Calu3 (cell line): ENCODE measurements at regions of chr11 and their contacts with region 1.

Region 1: GRCh38 chr11:19076744-19077589 is 16.4 kb upstream of the MRGPRX2 start:
- DNase-seq: peak; percentile 79
- H3K4me3 Mint-ChIP-seq: no peak overlapping the region
- H3K27ac Mint-ChIP-seq: no peak overlapping the region
- H3K4me1 Mint-ChIP-seq: peaks cover 42% of the 10 kb centered on the region
- H3K27me3 Mint-ChIP-seq: no peaks in the 10 kb centered on the region
- CTCF ChIP-seq: peak; percentile 91

Region 2: GRCh38 chr11:19060629-19061028 is 16.3 kb before region 1 on chr11 and contains the start of gene MRGPRX2:
- CTCF ChIA-PET with region 1: no interaction called
- intact Hi-C with region 1: no loop called
- DNase-seq: no peak
- H3K4me3 Mint-ChIP-seq: no peak within 1 kb of the TSS
- H3K27ac Mint-ChIP-seq: no peak within 1 kb of the TSS
- H3K4me1 Mint-ChIP-seq: no peaks in the 10 kb centered on the region
- H3K27me3 Mint-ChIP-seq: peaks cover 99% of the 10 kb centered on the region
- CTCF ChIP-seq: no peak
- total RNA-seq, gene MRGPRX2: not detected in 2 replicates

Region 3: DNA sequence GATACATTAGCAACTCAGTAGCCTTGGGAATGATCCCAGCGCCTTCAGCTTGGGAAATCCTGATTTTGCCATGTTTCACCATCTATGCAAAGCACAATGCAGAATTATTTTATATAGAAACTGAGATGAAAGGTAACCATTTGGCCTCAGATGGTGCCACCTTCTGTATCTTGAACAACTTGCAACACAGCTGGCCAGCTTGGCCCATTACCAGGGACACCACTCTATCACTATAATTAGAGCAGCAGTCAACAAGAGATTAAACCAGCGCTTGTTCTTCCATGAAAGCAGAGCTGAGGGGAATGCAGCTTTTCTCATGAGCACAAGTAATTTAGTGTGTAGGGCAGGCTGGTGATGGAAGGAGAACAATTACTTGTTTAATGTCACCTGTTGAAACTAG is 33.3 kb after region 1 on chr11:
- CTCF ChIA-PET with region 1: interaction called, 8 read pairs
- intact Hi-C with region 1: loop called (anchors 2 kb)
- DNase-seq: no peak
- H3K4me3 Mint-ChIP-seq: no peak overlapping the region
- H3K27ac Mint-ChIP-seq: no peak overlapping the region
- H3K4me1 Mint-ChIP-seq: no peaks in the 10 kb centered on the region
- H3K27me3 Mint-ChIP-seq: no peaks in the 10 kb centered on the region
- CTCF ChIP-seq: no peak

Region 4: DNA sequence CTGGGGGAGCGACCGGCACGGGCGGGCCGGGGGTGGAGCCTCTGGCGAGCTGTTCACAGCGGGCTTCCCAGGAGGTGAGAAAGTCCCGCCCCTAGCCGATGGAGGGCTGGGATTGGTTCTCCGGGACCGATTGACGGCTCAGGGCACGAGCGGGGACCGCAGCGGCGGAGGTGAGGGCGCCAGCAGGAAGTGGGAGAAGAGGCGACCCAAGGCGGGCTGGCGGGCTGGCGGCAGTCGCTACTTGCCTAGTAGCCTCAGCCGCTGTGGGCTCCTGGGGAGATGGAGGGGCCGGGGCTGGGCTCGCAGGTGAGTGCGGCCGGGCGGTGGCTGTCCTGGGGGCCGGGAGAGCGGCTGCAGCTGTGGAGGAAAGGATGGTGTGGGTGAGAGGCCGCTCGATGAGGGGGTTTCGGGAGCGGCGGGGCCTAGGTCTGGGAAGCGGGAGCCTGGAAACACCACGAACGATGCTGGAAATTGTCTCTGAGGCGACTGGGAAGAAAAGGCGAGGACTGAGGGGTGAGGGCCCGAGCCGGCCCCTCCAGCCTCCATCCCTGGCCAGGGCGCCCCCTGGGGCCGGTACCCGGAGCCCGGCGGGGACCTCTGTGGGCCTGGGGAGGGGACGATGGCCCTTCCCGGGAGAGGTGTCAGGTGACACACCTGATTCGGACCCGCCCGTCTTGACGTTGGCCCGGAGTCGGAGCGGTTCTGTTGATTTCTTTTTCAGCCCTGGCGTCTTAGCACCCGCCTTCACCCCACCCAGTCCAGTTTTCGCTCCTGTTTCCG is 40.2 kb after region 1 on chr11 and contains the start of gene ZDHHC13:
- CTCF ChIA-PET with region 1: interaction called, 13 read pairs
- intact Hi-C with region 1: loop called (anchors 2 kb)
- DNase-seq: peak; percentile 97
- H3K4me3 Mint-ChIP-seq: peak within 1 kb of the TSS; percentile 89
- H3K27ac Mint-ChIP-seq: peak within 1 kb of the TSS; percentile 77
- H3K4me1 Mint-ChIP-seq: peaks cover 35% of the 10 kb centered on the region
- H3K27me3 Mint-ChIP-seq: no peaks in the 10 kb centered on the region
- CTCF ChIP-seq: peak; percentile 62
- total RNA-seq, gene ZDHHC13: 22.4 and 26.8 TPM in 2 replicates

Region 5: DNA sequence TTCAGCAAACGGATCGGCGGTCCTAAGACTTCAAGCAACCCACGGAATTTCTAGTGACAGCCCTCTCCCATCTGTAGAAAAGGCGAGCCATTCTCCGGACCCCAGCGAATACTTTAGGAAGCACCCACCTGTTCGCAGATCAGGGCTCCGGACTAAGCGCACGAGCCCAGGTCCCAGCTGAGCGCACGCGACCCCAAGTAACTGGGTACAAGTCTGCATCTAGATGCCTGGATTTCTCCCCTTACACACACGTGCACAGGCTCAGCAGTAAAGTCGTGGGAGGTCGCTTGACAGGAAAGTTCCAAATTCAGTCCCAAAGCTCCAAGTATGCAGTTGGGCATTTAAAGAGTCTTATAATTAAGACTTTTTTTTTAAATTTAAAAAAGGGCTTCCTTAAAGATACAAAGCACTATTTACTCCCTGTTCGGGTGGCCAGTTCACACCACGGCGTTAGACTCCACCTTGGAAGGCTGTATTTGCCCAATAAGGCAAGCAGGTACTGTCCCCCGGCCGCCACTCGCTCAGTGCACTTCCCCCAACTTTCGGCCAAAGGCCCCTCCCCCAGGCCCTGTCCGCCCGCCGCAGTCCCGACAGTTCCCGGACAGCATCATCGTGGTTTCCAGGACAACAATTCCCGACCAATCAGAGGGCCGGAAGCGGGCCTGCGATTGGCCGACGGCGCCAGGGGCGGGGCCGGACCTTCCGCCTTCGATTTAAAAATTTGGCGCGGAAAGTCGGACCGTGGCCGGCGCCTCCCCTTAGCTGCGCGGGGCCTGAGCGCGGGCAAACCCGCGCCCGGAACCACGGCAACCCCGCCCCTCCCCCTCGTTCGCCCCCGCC is 163.7 kb after region 1 on chr11 and contains the start of gene E2F8:
- CTCF ChIA-PET with region 1: interaction called, 3 read pairs
- intact Hi-C with region 1: loop called (anchors 5 kb)
- DNase-seq: peak; percentile 98
- H3K4me3 Mint-ChIP-seq: peak within 1 kb of the TSS; percentile 70
- H3K27ac Mint-ChIP-seq: peak within 1 kb of the TSS; percentile 75
- H3K4me1 Mint-ChIP-seq: peaks cover 50% of the 10 kb centered on the region
- H3K27me3 Mint-ChIP-seq: no peaks in the 10 kb centered on the region
- CTCF ChIP-seq: no peak
- total RNA-seq, gene E2F8: 14.9 and 19.7 TPM in 2 replicates

Region 6: DNA sequence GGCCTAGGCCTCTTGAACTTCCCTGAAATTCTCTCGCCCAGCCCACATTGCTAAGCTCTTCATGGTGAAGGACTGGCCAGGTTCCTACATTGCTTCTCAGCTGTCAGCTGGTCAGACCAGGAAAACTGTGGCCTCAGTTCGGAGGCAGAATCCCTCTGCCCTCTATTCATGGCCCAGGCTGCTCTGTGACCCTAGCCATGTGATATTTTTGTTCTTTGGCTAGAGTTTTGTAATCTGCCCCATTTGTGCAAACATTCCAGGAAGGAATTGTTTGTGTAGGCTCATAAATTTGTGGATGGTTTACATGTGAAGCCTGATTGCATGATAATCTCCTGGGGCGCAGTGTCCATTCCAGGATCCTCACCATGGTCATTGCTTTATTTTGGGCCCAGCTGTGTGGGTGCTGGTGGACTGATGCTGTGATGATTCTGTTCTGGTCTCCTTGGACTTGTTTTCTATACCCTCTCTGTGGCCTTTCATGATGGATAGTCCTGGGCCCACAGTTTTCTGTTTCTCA is 312.9 kb after region 1 on chr11:
- CTCF ChIA-PET with region 1: no interaction called
- intact Hi-C with region 1: no loop called
- DNase-seq: no peak
- H3K4me3 Mint-ChIP-seq: no peak overlapping the region
- H3K27ac Mint-ChIP-seq: no peak overlapping the region
- H3K4me1 Mint-ChIP-seq: no peaks in the 10 kb centered on the region
- H3K27me3 Mint-ChIP-seq: peaks cover 60% of the 10 kb centered on the region
- CTCF ChIP-seq: no peak

Region 7: DNA sequence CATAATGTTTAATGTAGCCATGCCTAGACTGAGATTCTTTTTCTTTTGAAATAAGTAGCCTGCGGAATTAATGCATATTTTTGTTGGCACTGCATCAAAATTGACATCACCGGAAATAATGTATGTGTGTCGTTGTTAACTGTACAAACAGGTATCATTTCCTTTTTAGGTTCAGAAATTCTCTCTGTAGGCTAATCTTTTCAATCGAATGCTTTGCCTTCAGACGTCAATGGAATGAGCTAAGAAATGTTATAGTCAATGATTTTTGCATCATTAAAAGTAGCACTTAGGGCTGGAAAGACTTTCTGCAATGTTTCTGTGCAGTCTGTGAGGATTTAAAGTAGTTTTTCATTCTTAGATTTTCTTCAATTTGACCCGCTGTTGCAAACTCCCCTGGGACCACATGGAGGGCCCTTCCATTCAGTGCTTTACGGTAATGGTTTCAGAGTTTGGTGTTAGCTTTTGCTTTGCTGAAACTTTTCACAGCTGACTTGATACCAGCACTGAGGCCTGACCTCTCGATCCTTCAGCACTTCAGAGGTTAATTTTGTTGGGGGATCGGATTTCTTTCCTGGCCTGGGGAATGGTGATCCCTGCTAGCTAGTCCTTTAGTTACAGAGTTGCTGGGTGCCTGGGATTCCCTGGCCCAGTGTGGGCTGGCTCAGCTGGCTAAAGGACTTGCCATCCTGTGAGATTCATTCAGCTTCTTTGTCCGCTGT is 945.6 kb after region 1 on chr11:
- CTCF ChIA-PET with region 1: no interaction called
- intact Hi-C with region 1: no loop called
- DNase-seq: peak; percentile 9
- H3K4me3 Mint-ChIP-seq: peak overlapping the region; percentile 64
- H3K27ac Mint-ChIP-seq: peak overlapping the region; percentile 5
- H3K4me1 Mint-ChIP-seq: peaks cover 34% of the 10 kb centered on the region
- H3K27me3 Mint-ChIP-seq: no peaks in the 10 kb centered on the region
- CTCF ChIP-seq: no peak